ENCODE measurements at regions of chr12 and their contacts with region 1.

Region 1: DNA sequence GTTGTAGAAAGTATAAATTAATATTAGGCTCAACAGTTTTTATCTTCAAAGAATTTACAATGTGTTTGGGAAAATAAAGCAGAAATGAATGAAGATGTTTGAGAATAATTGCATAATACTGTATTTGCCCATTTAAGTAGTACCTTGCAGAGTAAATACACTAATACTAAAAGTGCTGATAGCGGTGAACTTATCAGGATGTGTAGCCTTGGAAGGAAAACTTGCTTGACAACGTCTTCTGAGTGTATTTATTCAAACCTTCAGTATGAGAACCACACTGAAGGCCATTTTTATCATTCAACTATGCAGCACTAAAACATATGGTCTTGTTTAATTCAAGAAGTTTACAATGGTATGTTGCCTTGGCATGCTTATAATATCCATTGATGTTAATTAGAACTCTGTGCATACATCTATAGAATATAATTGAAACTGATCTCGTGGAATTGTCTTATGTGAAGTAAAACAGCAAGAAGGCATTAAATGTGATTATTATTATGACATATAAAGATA is 41.3 kb downstream of the MSRB3 start:
- H3K4me3 Mint-ChIP-seq: no peak overlapping the region
- H3K27ac Mint-ChIP-seq: no peak overlapping the region
- H3K4me1 Mint-ChIP-seq: peaks cover 5% of the 10 kb centered on the region
- H3K27me3 Mint-ChIP-seq: no peaks in the 10 kb centered on the region

Region 2: GRCh38 chr12:65139389-65139788 is 180.4 kb before region 1 on chr12:
- intact Hi-C with region 1: no loop called
- H3K4me3 Mint-ChIP-seq: no peak overlapping the region
- H3K27ac Mint-ChIP-seq: no peak overlapping the region
- H3K4me1 Mint-ChIP-seq: peaks cover 10% of the 10 kb centered on the region
- H3K27me3 Mint-ChIP-seq: peaks cover 4% of the 10 kb centered on the region

Region 3: DNA sequence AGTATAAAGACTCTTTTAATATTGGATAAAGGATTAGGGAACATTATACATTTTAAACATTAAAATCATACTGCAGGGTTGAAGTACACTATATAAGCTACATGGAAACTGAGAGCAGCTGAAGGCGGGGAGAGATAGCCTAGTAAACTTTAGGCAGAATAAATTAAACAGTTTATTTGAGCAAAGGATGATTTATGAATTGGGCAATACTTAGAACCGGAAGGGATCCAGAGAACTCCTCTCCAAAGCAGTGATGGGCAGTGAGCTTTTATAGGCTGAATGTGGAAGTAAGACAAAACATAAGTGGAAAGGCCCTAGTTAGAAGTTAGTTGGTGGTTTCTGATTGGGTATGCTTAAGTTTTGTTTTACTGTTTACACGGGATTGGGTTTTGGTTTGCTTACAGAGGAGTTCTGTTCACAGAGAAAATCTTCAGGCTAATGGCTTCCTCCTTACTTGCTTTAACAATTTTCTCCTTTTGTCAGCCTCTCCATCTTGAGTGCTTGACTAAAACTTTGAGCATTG is 131.5 kb before region 1 on chr12:
- intact Hi-C with region 1: no loop called
- H3K4me3 Mint-ChIP-seq: no peak overlapping the region
- H3K27ac Mint-ChIP-seq: no peak overlapping the region
- H3K4me1 Mint-ChIP-seq: peaks cover 40% of the 10 kb centered on the region
- H3K27me3 Mint-ChIP-seq: no peaks in the 10 kb centered on the region

Region 4: GRCh38 chr12:66107451-66107915 is 787.7 kb after region 1 on chr12:
- intact Hi-C with region 1: loop called (anchors 5 kb)
- H3K4me3 Mint-ChIP-seq: no peak overlapping the region
- H3K27ac Mint-ChIP-seq: no peak overlapping the region
- H3K4me1 Mint-ChIP-seq: peaks cover 9% of the 10 kb centered on the region
- H3K27me3 Mint-ChIP-seq: peaks cover 2% of the 10 kb centered on the region